ENCODE measurements at regions of chr14 and their contacts with region 1.

Region 1: DNA sequence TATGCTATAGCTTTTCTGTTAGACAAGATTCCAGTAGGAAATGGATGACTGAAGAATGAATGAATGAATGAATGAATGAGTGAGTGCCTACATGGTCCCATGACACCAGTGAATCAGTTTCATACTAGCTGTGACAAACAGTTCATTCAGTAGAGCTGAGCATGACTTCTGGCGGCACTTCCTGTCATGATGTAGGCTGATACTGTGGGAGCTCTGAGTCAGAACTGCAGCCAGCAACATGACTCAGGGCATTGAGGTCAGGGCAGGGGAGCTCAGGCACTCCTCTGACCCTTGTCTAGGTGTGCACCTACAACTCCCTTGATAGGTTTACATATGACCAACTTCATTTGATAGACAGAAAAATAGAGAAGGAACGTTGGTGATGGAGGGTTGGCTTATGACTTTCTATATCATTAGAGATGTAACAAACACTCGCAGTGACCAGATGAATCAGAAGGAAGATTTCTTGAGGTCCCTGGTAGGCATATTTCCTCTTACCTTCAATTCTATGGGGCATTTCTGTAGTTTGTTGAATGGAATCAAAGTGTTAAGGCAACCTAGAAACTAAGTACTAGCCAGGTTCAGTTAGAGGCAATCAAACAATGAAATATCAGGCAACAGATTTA is 139.3 kb upstream of the ARHGAP5 start:
- DNase-seq: peak; percentile 58
- CTCF ChIP-seq: no peak

Region 2: GRCh38 chr14:32469388-32470160 is 531.7 kb after region 1 on chr14:
- in situ Hi-C with region 1: loop called (anchors 25 kb)
- DNase-seq: peak; percentile 26
- CTCF ChIP-seq: peak; percentile 53